ENCODE measurements at regions of chr20 and their contacts with region 1.

Region 1: GRCh38 chr20:34190679-34191090 is 50.5 kb upstream of the ASIP start:
- DNase-seq: peak; percentile 78
- H3K4me3 ChIP-seq: no peak overlapping the region
- H3K27ac ChIP-seq: no peak overlapping the region
- H3K27me3 ChIP-seq: peaks cover 47% of the 10 kb centered on the region
- CTCF ChIP-seq: peak; percentile 92

Region 2: DNA sequence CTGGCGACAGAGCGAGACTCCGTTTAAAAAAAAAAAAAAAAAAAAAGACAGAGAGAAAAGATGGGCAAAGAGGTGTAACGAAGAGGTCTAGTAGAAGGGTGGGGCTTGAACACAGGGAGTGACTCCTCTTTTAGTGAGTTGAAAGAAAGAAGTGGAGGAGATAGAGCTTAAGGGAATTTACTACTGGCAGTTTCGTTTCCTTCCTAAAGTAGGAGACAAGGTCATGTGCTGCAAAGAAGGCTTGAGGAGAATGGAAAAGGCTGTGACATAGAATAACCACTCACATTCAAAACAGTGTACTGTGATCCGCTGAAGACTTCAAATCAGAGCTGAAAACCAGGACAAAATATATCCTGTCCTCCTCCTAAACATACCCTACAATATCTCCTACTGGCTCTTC is 14.8 kb before region 1 on chr20:
- CTCF ChIA-PET with region 1: interaction called, 15 read pairs
- POLR2A ChIA-PET with region 1: no interaction called
- DNase-seq: no peak
- H3K4me3 ChIP-seq: no peak overlapping the region
- H3K27ac ChIP-seq: no peak overlapping the region
- H3K27me3 ChIP-seq: peaks cover 17% of the 10 kb centered on the region
- CTCF ChIP-seq: no peak

Region 3: DNA sequence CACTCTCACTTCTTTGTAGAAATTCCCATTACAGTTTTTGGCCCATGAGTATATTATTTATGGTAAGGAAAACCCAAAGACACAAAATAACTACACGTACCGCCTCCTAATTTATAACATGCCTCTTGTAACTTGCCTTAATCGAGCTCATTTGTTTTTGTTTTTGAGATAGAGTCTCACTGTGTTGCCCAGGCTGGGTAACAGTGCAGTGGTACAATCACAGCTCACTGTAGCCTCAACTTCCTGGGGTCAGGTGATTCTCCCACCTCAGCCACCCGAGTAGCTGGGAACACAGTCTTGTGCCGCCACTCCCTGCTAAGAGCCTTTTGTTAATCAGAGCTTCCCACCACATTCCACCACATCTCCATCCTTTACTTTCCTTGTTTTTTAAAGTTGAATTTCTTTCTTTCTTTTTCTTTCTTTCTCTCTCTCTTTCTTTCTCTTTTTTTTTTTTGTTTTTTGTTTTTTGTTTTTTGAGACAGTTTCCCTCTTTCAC is 66.0 kb after region 1 on chr20:
- CTCF ChIA-PET with region 1: interaction called, 12 read pairs
- POLR2A ChIA-PET with region 1: no interaction called
- DNase-seq: no peak
- H3K4me3 ChIP-seq: no peak overlapping the region
- H3K27ac ChIP-seq: no peak overlapping the region
- H3K27me3 ChIP-seq: no peaks in the 10 kb centered on the region
- CTCF ChIP-seq: no peak

Region 4: DNA sequence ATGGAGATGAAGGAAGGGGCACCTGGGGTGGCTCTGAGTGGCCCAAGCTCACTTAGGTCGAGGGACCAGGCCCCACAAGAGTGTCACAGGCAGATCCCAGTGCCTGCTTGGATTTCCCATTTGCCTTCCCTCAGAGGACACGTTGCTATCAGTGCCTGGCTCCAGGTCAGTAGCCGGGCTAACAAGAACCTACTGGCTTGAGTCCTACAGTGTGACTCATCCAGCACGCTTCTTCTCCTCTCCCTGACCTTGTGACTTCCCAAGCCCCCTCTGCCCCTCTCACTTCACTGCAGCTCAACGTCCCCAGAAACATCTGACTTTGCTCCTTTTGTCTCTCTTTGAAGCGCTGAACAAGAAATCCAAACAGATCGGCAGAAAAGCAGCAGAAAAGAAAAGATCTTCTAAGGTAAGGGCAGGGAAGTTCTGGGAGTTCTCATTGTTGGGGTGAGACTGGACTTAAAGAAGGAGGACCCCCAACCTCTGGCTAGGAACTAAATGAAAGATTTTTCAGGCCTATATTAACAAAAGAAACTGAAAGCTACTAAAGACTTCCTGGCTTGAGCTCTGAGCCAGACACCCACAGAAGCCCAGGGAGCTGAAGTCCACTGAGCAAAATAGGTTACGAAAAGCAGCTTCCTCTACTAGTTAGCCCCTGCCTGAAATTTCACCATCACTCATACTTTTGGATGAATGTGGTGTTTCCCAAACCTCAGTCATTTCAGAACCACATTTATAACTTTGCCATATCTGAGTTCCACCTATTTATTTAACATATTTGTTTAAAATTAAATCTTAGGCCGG is 72.0 kb after region 1 on chr20:
- CTCF ChIA-PET with region 1: interaction called, 12 read pairs
- POLR2A ChIA-PET with region 1: no interaction called
- DNase-seq: no peak
- H3K4me3 ChIP-seq: peak overlapping the region; percentile 20; the same call in 1 of the 2 replicates
- H3K27ac ChIP-seq: peak overlapping the region; percentile 77
- H3K27me3 ChIP-seq: no peaks in the 10 kb centered on the region
- CTCF ChIP-seq: no peak

Measured in AG04450 (cell line).